ENCODE measurements at regions of chr13 and their contacts with region 1.

Region 1: GRCh38 chr13:110412132-110412914 is 105.2 kb downstream of the COL4A2 start:
- DNase-seq: peak; percentile 84 to 93
- ATAC-seq: peak; percentile 81 to 89 (median 84)
- H3K4me3 ChIP-seq: peak overlapping the region in 1 of 10 donors; percentile 1
- H3K27ac ChIP-seq: peak overlapping the region; percentile 54 to 93 (median 85)
- H3K4me1 ChIP-seq: peaks cover 56 to 97% (median 86%) of the 10 kb centered on the region in 9 donors
- H3K27me3 ChIP-seq: no peaks in the 10 kb centered on the region
- CTCF ChIP-seq: peak; percentile 88 to 98 (median 93)

Region 2: GRCh38 chr13:110220471-110220870 is 191.9 kb before region 1 on chr13:
- intact Hi-C with region 1: loop called in 9 of 10 experiments (anchors 1 to 10 kb)
- DNase-seq: no peak
- ATAC-seq: no peak
- H3K4me3 ChIP-seq: no peak overlapping the region
- H3K27ac ChIP-seq: peak overlapping the region in 8 of 10 donors; percentile 32 to 90 (median 85)
- H3K4me1 ChIP-seq: peaks cover 8 to 94% (median 75%) of the 10 kb centered on the region in 9 donors
- H3K27me3 ChIP-seq: no peaks in the 10 kb centered on the region
- CTCF ChIP-seq: no peak

Region 3: DNA sequence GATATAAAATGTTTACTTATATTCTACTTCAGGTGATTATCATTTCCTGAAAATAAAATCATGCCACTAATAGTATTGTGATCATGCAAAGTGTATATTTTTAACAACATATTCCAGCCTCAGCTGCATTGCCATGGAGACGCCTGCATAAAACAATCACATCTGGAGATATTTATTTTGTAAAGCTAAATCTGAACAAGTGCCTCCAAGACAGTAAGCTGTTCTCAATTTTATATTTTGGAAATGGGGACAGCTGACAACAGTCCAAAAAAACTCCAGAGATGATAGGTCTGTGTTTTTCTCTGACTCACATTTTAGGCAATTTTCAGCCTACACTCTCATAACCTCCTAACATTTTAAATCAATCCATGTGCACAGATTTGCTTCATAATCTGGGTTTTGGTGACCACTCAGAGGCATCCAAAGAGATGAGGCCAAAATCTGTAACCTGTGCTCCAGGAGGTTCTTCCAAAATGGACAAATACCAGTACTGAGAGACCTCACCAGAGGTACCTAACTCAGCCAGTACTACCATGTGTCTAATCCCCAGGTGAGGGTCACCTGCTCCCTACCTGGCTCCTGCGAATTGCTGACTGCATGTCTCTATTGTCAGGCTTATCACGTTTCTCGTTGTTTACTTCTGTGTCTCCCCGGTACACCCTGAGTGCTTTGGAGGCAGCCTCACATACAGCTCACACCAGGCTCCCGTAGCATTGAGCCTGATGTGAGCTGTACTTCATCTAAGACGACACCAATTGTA is 168.1 kb before region 1 on chr13:
- intact Hi-C with region 1: loop called in 2 of 10 experiments (anchors 5 kb)
- DNase-seq: peak in 1 of 2 donors; percentile 59
- ATAC-seq: peak in 7 of 8 donors; percentile 11 to 52 (median 36)
- H3K4me3 ChIP-seq: no peak overlapping the region
- H3K27ac ChIP-seq: peak overlapping the region; percentile 9 to 89 (median 71)
- H3K4me1 ChIP-seq: peaks cover 31 to 99% (median 89%) of the 10 kb centered on the region in 9 donors
- H3K27me3 ChIP-seq: no peaks in the 10 kb centered on the region
- CTCF ChIP-seq: no peak

Region 4: GRCh38 chr13:110312339-110313031 is 99.8 kb before region 1 on chr13:
- intact Hi-C with region 1: loop called in 9 of 10 experiments (anchors 1 to 10 kb)
- DNase-seq: no peak
- ATAC-seq: peak in 1 of 8 donors; percentile 16
- H3K4me3 ChIP-seq: peak overlapping the region in 7 of 10 donors; percentile 81 to 96 (median 95)
- H3K27ac ChIP-seq: peak overlapping the region in 9 of 10 donors; percentile 54 to 99 (median 97)
- H3K4me1 ChIP-seq: peaks cover 46 to 88% (median 79%) of the 10 kb centered on the region in 9 donors
- H3K27me3 ChIP-seq: peaks cover 0 to 46% (median 0%) of the 10 kb centered on the region in 7 donors
- CTCF ChIP-seq: peak in 1 of 9 donors; percentile 13

Region 5: DNA sequence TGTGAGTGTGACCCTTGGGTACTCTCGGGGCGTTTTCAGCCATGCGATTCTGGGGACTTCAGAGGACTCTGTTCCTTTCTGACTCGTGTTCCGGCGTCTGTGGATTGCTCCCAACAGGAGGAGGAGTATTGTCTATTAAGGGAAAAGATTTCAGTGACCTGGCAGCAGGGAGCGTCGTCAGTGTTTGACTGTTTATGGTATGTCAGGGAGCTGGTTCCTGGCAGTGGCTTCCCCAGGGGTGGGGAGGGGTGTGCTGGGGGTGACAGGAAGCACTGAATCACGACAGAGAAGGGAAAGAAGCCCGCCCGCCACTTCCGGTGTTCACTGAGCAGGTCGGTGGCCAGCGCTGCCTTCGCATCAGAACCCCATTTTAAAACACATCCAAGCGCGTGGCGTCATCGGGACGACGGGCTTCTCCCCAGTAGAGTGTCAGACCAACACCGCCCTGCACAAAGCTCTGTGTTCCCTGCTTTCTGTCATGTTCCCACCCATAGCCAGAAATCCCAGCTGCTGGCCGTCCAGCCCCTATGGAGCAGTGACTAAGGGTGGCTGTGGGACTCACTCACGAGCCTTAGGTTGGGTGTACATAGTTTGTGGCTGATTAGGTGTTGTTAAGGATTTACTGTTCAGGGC is 71.4 kb before region 1 on chr13:
- intact Hi-C with region 1: loop called in 2 of 10 experiments (anchors 10 kb)
- DNase-seq: peak; percentile 79 to 91
- ATAC-seq: peak; percentile 57 to 85 (median 74)
- H3K4me3 ChIP-seq: peak overlapping the region in 7 of 10 donors; percentile 2 to 34 (median 25)
- H3K27ac ChIP-seq: peak overlapping the region; percentile 63 to 96 (median 90)
- H3K4me1 ChIP-seq: peaks cover 28 to 85% (median 70%) of the 10 kb centered on the region in 9 donors
- H3K27me3 ChIP-seq: peaks cover 0 to 7% (median 0%) of the 10 kb centered on the region in 7 donors
- CTCF ChIP-seq: peak in 1 of 9 donors; percentile 14

Region 6: DNA sequence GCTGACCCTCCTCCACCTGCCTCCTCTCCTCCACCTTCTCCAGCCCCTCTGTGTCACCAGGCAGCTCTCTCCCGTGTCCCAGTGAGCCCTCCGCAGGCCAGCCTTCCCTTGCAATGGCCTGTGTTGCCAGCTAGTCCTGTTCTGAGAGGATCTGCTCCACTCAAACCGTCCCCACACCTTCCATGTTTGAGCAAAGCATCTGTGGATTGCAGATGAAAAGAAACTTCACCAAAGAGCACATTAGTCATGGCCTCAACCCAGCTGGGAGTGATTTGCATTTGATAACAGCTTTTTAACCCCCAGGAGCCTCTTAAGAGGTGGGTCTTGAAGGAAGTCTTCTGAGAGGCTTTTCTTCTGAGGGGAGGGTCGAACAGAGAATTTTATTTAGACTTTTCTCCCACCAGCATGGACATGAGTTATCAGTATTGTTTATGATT is 32.4 kb before region 1 on chr13:
- intact Hi-C with region 1: loop called in 1 of 10 experiments (anchors 5 kb)
- DNase-seq: no peak
- ATAC-seq: peak in 1 of 8 donors; percentile 20
- H3K4me3 ChIP-seq: no peak overlapping the region
- H3K27ac ChIP-seq: peak overlapping the region in 2 of 10 donors; percentile 50 to 77
- H3K4me1 ChIP-seq: peaks cover 7 to 79% (median 64%) of the 10 kb centered on the region in 9 donors
- H3K27me3 ChIP-seq: no peaks in the 10 kb centered on the region
- CTCF ChIP-seq: no peak

Region 7: DNA sequence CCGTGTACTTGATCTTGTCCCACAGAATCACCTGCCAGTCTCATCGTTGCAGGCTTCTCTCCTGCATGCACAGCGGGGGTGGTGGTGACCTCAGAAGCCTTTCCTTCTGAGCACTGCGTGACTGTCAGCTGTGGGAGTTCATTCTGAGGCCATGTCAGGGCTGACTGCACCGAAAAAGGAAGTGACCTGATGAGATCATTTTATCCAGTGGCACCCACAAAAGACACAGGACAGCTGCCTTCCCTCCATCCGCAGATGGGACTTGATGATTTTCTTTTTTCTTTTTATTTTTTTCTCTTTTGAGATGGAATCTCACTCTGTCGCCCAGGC is 59.5 kb after region 1 on chr13:
- intact Hi-C with region 1: no loop called
- DNase-seq: peak; percentile 35 to 68
- ATAC-seq: peak; percentile 35 to 90 (median 80)
- H3K4me3 ChIP-seq: no peak overlapping the region
- H3K27ac ChIP-seq: peak overlapping the region in 5 of 10 donors; percentile 1 to 67 (median 25)
- H3K4me1 ChIP-seq: peaks cover 0 to 32% (median 6%) of the 10 kb centered on the region in 9 donors
- H3K27me3 ChIP-seq: no peaks in the 10 kb centered on the region
- CTCF ChIP-seq: no peak